CD8-positive, alpha-beta T cell (primary cell): ENCODE measurements at regions of chr19 and their contacts with region 1.

Region 1: DNA sequence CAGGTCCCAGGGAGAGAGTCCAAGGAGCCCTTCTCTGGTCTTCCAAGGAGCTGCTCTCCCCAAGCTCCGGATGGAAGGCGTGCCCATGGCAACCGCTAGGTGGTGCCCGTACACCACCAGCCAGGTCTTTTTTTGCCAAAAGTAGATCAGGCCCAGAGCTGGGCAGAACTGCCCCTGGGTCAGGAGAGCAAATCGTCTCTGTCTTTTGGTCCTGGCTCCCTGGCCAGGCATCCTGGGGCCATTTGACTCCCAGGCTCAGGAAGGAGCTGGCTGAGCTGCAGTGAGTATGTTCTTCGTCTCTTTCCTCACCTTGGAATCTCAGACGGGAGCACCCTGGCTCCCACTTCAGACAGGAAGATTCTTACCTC is 24.6 kb upstream of the BCL3 start:
- DNase-seq: peak; percentile 62 to 89 (median 75)
- ATAC-seq: peak; percentile 92
- H3K4me3 ChIP-seq: no peak overlapping the region
- H3K4me3 Mint-ChIP-seq: no peak overlapping the region
- H3K27ac ChIP-seq: no peak overlapping the region
- H3K27ac Mint-ChIP-seq: no peak overlapping the region
- H3K4me1 ChIP-seq: peaks cover 25% of the 10 kb centered on the region
- H3K4me1 Mint-ChIP-seq: peaks cover 20% of the 10 kb centered on the region
- H3K27me3 ChIP-seq: peaks cover 0 to 4% of the 10 kb centered on the region in 2 experiments
- H3K27me3 Mint-ChIP-seq: no peaks in the 10 kb centered on the region
- CTCF ChIP-seq: peak; percentile 94

Region 2: DNA sequence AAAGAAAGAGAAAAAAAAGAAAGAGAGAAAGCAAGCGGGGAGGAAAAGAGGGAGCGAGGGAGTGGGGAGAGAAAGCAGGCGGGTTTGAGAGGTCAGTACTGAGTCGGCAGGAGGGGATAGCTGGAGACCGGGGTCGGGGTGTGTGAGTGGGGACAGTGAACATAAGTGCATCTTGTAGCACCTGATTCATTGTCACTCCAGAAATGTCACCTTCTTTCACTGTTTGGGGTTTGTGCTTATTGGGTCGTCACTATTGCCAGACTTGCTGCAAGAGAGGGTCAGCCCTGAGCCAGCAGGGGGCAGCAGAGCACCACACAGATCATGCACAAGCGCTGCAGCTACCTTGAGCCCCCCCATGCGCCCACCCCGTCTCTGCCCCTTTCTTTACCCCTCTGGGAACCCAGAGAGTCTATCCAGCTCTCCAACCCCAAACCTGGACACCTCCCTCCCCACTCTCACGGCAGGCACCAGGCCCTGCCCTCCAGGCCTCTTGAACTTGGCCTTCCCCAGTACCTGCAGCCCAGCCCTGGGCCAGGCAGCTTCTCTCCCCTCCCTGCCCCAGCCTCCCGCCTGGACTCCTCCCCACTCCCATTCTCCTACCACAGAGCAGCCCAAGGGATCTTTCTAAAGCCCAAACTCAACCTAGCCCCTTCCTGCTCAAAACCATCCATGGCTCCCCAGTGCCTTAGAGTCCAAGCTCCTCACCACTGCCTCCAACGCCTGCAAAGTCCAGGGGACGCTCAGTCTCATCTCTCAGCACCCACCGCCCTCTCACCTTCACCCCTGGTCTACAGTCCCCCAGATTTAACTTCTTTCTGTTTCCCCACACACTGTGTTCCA is 34.7 kb before region 1 on chr19:
- CTCF ChIA-PET with region 1: interaction called, 74 read pairs
- POLR2A ChIA-PET with region 1: no interaction called
- intact Hi-C with region 1: loop called (anchors 1 kb)
- DNase-seq: peak; percentile 64 to 87 (median 81)
- ATAC-seq: peak; percentile 59
- H3K4me3 ChIP-seq: no peak overlapping the region
- H3K4me3 Mint-ChIP-seq: no peak overlapping the region
- H3K27ac ChIP-seq: no peak overlapping the region
- H3K27ac Mint-ChIP-seq: no peak overlapping the region
- H3K4me1 ChIP-seq: peaks cover 25% of the 10 kb centered on the region
- H3K4me1 Mint-ChIP-seq: peaks cover 22% of the 10 kb centered on the region
- H3K27me3 ChIP-seq: peaks cover 0 to 4% of the 10 kb centered on the region in 2 experiments
- H3K27me3 Mint-ChIP-seq: peaks cover 16% of the 10 kb centered on the region
- CTCF ChIP-seq: peak; percentile 81

Region 3: GRCh38 chr19:44741841-44742352 is 18.0 kb after region 1 on chr19:
- CTCF ChIA-PET with region 1: interaction called, 27 read pairs
- POLR2A ChIA-PET with region 1: no interaction called
- intact Hi-C with region 1: loop called (anchors 1 to 2 kb)
- DNase-seq: peak in 1 of 9 experiments; percentile 52
- ATAC-seq: no peak
- H3K4me3 ChIP-seq: no peak overlapping the region
- H3K4me3 Mint-ChIP-seq: no peak overlapping the region
- H3K27ac ChIP-seq: no peak overlapping the region
- H3K27ac Mint-ChIP-seq: no peak overlapping the region
- H3K4me1 ChIP-seq: peaks cover under 1% of the 10 kb centered on the region
- H3K4me1 Mint-ChIP-seq: peaks cover 13% of the 10 kb centered on the region
- H3K27me3 ChIP-seq: no peaks in the 10 kb centered on the region
- H3K27me3 Mint-ChIP-seq: no peaks in the 10 kb centered on the region
- CTCF ChIP-seq: no peak

Region 4: GRCh38 chr19:44746946-44747738 is 23.2 kb after region 1 on chr19:
- CTCF ChIA-PET with region 1: interaction called, 29 read pairs
- POLR2A ChIA-PET with region 1: no interaction called
- intact Hi-C with region 1: loop called (anchors 1 to 2 kb)
- DNase-seq: peak; percentile 59 to 97 (median 91)
- ATAC-seq: peak; percentile 86
- H3K4me3 ChIP-seq: peak overlapping the region; percentile 60 to 63
- H3K4me3 Mint-ChIP-seq: peak overlapping the region; percentile 91
- H3K27ac ChIP-seq: peak overlapping the region; percentile 41 to 89
- H3K27ac Mint-ChIP-seq: peak overlapping the region; percentile 95
- H3K4me1 ChIP-seq: peaks cover 42% of the 10 kb centered on the region
- H3K4me1 Mint-ChIP-seq: peaks cover 49% of the 10 kb centered on the region
- H3K27me3 ChIP-seq: no peaks in the 10 kb centered on the region
- H3K27me3 Mint-ChIP-seq: no peaks in the 10 kb centered on the region
- CTCF ChIP-seq: no peak

Region 5: DNA sequence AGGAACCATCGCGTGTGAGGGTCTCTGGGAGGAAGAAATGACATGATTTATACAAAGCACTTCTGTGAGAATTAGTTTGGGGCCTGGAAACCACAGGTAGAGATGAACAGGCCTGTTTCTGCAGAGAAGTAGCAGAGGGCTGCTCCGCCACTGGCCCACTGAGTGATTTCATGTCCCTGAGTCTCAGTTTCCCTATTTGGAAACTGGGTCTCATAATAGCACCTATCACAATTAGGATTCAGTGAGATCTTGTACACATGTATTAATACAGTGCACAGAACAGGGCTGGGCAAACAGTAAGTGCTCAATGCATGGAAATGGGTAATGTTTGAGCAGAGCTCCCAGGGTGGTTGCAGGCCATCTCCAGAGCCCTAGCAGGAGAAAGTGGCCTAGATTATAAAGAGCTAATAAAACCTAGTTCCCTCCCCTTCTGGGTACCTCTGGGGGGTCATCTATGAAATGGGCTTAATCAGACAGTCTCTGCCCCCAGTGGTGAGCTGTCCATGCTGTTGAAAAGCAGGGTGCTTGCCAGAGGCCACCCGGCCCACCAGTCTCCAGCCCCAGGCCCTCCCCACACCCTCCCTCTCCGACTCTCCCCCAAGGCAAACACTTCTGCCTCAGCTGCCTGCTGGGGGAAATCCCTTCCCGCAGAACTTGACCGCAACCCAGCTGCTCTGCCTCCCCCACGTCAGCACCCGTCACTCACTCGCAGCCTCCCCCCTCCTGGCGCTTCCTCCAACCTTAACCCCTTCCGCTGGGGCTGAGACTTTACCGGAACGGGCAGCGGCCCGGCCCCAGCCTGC is 29.1 kb after region 1 on chr19:
- CTCF ChIA-PET with region 1: interaction called, 638 read pairs
- POLR2A ChIA-PET with region 1: interaction called, 10 read pairs
- intact Hi-C with region 1: loop called in 1 of 2 experiments (anchors 2 kb)
- DNase-seq: peak; percentile 88 to 99 (median 93)
- ATAC-seq: peak; percentile 76
- H3K4me3 ChIP-seq: peak overlapping the region; percentile 13 to 68
- H3K4me3 Mint-ChIP-seq: peak overlapping the region; percentile 95
- H3K27ac ChIP-seq: peak overlapping the region; percentile 83 to 95
- H3K27ac Mint-ChIP-seq: peak overlapping the region; percentile 97
- H3K4me1 ChIP-seq: peaks cover 64% of the 10 kb centered on the region
- H3K4me1 Mint-ChIP-seq: peaks cover 65% of the 10 kb centered on the region
- H3K27me3 ChIP-seq: no peaks in the 10 kb centered on the region
- H3K27me3 Mint-ChIP-seq: no peaks in the 10 kb centered on the region
- CTCF ChIP-seq: no peak

Region 6: GRCh38 chr19:44782729-44783128 is 58.8 kb after region 1 on chr19:
- CTCF ChIA-PET with region 1: interaction called, 638 read pairs
- POLR2A ChIA-PET with region 1: no interaction called
- intact Hi-C with region 1: no loop called
- DNase-seq: no peak
- ATAC-seq: no peak
- H3K4me3 ChIP-seq: no peak overlapping the region
- H3K4me3 Mint-ChIP-seq: no peak overlapping the region
- H3K27ac ChIP-seq: no peak overlapping the region
- H3K27ac Mint-ChIP-seq: no peak overlapping the region
- H3K4me1 ChIP-seq: no peaks in the 10 kb centered on the region
- H3K4me1 Mint-ChIP-seq: peaks cover 4% of the 10 kb centered on the region
- H3K27me3 ChIP-seq: peaks cover 0 to 5% of the 10 kb centered on the region in 2 experiments
- H3K27me3 Mint-ChIP-seq: peaks cover 14% of the 10 kb centered on the region
- CTCF ChIP-seq: no peak

Region 7: GRCh38 chr19:44845612-44846454 is 121.9 kb after region 1 on chr19 and contains the start of gene NECTIN2:
- CTCF ChIA-PET with region 1: interaction called, 5 read pairs
- POLR2A ChIA-PET with region 1: no interaction called
- intact Hi-C with region 1: loop called (anchors 1 to 10 kb)
- DNase-seq: peak; percentile 47 to 85 (median 71)
- ATAC-seq: peak; percentile 68
- H3K4me3 ChIP-seq: peak within 1 kb of the TSS; percentile 39 to 46
- H3K4me3 Mint-ChIP-seq: peak within 1 kb of the TSS; percentile 96
- H3K27ac ChIP-seq: no peak within 1 kb of the TSS
- H3K27ac Mint-ChIP-seq: peak within 1 kb of the TSS; percentile 55
- H3K4me1 ChIP-seq: peaks cover 45% of the 10 kb centered on the region
- H3K4me1 Mint-ChIP-seq: peaks cover 26% of the 10 kb centered on the region
- H3K27me3 ChIP-seq: peaks cover 0 to 18% of the 10 kb centered on the region in 2 experiments
- H3K27me3 Mint-ChIP-seq: peaks cover 19% of the 10 kb centered on the region
- CTCF ChIP-seq: peak; percentile 36
- total RNA-seq, gene NECTIN2: 2.0 to 2.5 TPM